Activated CD8-positive, alpha-beta T cell treated with anti-CD3 and anti-CD28 coated beads for 36 hours (primary cell): ENCODE measurements at regions of chr19 and their contacts with region 1.

Region 1: GRCh38 chr19:40640744-40641143 is 39.6 kb downstream of the LTBP4 start:
- DNase-seq: no peak
- ATAC-seq: no peak
- H3K4me3 Mint-ChIP-seq: no peak overlapping the region
- H3K27ac Mint-ChIP-seq: no peak overlapping the region
- H3K4me1 Mint-ChIP-seq: peaks cover 2% of the 10 kb centered on the region
- H3K27me3 Mint-ChIP-seq: peaks cover 1% of the 10 kb centered on the region
- CTCF ChIP-seq: no peak

Region 2: GRCh38 chr19:40542202-40542859 is 98.4 kb before region 1 on chr19:
- CTCF ChIA-PET with region 1: interaction called, 35 read pairs
- POLR2A ChIA-PET with region 1: no interaction called
- intact Hi-C with region 1: no loop called
- DNase-seq: no peak
- ATAC-seq: no peak
- H3K4me3 Mint-ChIP-seq: no peak overlapping the region
- H3K27ac Mint-ChIP-seq: no peak overlapping the region
- H3K4me1 Mint-ChIP-seq: no peaks in the 10 kb centered on the region
- H3K27me3 Mint-ChIP-seq: peaks cover 2% of the 10 kb centered on the region
- CTCF ChIP-seq: no peak

Region 3: DNA sequence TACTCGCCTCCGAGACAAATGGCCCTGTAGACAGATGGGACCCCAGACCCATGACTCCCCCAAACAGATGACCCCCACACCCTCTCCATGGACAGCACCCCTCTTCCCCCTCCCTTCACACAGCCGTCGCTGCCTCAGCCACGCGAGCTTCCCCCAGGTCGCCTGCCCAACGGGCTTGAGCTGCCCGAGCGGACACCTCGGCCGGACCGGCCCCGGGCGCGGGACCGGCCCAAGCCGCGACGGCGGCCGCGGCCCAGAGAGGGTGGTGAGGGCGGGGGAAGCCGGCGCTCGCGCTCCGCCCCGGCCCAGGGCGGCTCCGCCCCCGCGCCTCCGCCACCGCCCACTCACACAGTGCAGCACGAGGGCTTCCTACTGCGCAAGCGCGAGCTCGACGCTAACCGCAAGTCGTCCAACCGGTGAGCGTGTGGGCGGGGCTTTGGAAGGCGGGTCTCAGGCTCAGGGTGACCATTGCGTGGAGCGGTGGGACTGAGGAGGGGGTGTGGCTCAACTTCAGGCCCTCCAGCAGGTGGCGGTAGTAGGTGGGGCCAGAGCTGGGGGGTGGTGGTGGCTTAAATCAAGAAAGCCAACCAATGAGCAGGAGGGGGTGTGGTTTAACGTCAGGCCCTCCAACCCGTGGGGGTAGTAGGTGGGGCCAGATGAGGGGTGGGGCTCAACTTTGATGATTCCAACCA is 70.3 kb before region 1 on chr19:
- CTCF ChIA-PET with region 1: interaction called, 19 read pairs
- POLR2A ChIA-PET with region 1: no interaction called
- intact Hi-C with region 1: no loop called
- DNase-seq: peak; percentile 98
- ATAC-seq: peak; percentile 96
- H3K4me3 Mint-ChIP-seq: peak overlapping the region; percentile 48
- H3K27ac Mint-ChIP-seq: peak overlapping the region; percentile 51
- H3K4me1 Mint-ChIP-seq: peaks cover 10% of the 10 kb centered on the region
- H3K27me3 Mint-ChIP-seq: peaks cover 28% of the 10 kb centered on the region
- CTCF ChIP-seq: no peak

Region 4: DNA sequence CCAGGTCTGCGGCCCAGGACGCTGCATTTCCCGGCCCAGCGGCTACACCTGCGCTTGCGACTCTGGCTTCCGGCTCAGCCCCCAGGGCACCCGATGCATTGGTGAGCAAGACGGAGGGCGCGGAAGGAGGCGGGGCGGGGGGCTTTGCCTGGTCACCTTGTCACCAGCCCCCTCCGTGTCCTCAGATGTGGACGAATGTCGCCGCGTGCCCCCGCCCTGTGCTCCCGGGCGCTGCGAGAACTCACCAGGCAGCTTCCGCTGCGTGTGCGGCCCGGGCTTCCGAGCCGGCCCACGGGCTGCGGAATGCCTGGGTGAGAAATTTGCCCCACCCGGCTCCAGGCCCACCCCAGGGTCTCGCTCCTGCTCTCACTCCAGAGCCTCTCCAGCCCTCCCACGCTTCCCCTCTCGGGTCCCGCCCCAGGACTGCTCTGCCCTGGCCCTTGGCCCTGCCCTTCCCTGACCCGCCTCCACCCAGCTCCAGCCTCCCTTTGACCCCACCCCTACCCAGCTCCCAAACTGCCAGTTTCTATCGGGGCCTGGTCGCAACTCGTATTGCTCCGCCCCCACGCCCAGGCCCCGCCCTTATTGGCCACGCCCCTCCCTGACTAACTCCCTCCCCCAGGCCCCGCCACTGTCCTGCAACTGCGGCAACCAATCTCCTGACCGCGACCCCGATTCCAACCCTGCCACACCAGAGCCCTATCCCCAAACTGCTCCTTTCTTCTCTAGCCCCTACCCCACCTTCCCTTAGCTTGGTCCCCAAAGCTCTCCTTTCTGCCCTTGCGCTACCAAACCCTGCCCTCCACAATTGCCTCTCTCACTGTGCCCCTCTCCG is 31.0 kb before region 1 on chr19:
- CTCF ChIA-PET with region 1: interaction called, 126 read pairs
- POLR2A ChIA-PET with region 1: no interaction called
- intact Hi-C with region 1: no loop called
- DNase-seq: peak; percentile 96
- ATAC-seq: peak; percentile 58
- H3K4me3 Mint-ChIP-seq: peak overlapping the region; percentile 80
- H3K27ac Mint-ChIP-seq: peak overlapping the region; percentile 98
- H3K4me1 Mint-ChIP-seq: peaks cover 55% of the 10 kb centered on the region
- H3K27me3 Mint-ChIP-seq: no peaks in the 10 kb centered on the region
- CTCF ChIP-seq: no peak